CD8-positive, alpha-beta T cell (primary cell): ENCODE measurements at regions of chr1 and their contacts with region 1.

Region 1: DNA sequence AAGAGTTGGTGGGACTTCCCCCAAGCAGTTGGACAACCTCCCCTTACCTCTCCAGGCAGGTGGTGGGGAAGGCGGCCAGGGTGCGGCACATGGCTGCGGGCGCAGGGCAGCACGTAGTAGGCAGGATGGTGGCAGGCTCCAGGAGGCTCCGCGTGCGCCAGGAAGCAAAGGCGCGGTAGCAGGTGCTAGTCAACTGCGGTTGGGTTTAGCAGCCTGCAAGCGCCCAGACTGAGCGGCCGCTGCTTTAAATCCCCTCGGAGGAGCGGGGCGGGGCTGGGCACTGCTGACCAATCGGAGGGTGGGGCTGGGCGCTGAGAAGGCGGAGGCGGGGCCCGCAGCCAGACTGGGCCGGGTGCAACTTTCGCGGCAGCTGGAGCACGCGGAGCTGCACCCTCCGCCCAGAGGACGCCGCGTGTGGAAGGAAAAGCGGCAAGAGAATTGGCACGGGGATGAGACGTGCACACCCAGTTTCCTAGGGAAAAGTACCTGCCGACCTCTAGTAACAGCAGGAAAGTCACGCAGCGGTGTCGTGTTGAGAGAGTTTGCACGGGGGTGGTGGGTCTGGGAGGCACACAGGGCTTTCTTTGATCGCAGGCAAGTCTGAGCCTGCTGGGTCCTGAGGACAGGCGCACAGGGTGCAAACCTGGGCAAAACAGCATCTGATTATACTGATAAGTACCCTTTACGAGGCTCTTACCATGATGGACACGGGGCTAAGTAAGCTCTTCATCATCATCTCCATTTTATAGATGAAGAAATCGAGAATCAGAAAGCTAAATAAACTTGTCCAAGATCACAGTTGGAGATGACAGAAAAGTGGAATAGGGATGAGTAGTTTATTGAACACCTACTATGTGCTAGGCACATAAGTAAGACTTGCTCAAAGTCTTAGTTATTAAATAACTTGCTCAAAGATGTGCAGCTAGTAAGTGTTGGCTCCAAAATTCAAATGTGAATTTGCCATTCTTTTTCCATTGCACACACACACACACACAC is at the start of gene RGS16:
- DNase-seq: peak; percentile 74 to 94 (median 87)
- ATAC-seq: peak; percentile 91
- H3K4me3 ChIP-seq: peak within 1 kb of the TSS; percentile 18 to 45
- H3K4me3 Mint-ChIP-seq: peak within 1 kb of the TSS; percentile 78
- H3K27ac ChIP-seq: no peak within 1 kb of the TSS
- H3K27ac Mint-ChIP-seq: peak within 1 kb of the TSS; percentile 81
- H3K4me1 ChIP-seq: peaks cover 16% of the 10 kb centered on the region
- H3K4me1 Mint-ChIP-seq: peaks cover 17% of the 10 kb centered on the region
- H3K27me3 ChIP-seq: peaks cover 0 to 6% of the 10 kb centered on the region in 2 experiments
- H3K27me3 Mint-ChIP-seq: peaks cover 24% of the 10 kb centered on the region
- CTCF ChIP-seq: no peak
- total RNA-seq, gene RGS16: 11.6 to 12.0 TPM

Region 2: DNA sequence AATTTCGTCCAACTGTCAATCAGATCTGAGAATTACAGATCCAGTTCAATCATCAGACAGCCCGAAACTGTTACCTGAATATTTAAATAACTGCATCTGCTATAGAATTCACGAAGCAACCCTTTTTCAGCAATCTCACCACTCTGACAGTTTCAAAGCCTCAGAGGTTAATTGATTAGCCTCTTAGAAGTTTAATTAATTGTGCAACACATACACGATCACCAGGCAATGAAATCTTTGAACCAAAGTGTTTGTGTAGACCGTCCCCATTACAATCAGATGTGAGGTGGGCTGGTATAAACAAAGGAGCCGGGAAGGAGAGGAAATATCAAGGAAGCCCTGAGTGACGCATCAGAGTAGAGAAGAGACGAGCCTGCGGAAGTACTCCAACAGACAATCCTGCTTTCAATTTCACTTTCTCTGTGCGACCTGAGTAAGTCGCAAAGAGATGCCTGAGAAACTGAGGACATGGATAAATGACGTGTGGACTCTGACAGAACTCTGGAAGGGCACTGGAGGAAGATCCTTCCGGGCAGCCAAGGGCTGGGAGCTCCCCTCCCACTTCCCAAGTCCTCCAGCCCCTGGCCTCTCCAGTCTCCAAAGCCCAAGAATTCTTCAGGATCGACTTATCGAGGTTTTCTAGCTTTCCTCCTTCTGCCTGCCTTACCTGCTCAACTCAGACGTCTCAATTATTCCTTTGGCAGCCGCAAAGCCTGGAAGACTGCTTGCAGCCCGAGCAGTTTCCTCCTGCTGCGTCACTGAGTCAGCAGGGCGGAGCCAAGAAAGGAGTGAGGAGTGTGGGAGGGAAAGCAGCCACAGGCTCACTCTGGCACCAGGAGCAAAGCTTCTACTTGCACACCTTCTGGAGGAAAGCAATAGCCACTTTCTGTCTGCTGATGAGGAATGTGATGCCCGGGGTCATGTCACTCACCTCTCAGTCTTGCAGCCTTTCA is 15.7 kb before region 1 on chr1 and contains the start of gene RNASEL:
- CTCF ChIA-PET with region 1: interaction called, 47 read pairs
- POLR2A ChIA-PET with region 1: interaction called, 3 read pairs
- intact Hi-C with region 1: no loop called
- DNase-seq: peak; percentile 24 to 87 (median 51)
- ATAC-seq: peak; percentile 92
- H3K4me3 ChIP-seq: peak within 1 kb of the TSS; percentile 78 to 95
- H3K4me3 Mint-ChIP-seq: peak within 1 kb of the TSS; percentile 94
- H3K27ac ChIP-seq: peak within 1 kb of the TSS; percentile 96 to 99
- H3K27ac Mint-ChIP-seq: peak within 1 kb of the TSS; percentile 99
- H3K4me1 ChIP-seq: peaks cover 44% of the 10 kb centered on the region
- H3K4me1 Mint-ChIP-seq: peaks cover 52% of the 10 kb centered on the region
- H3K27me3 ChIP-seq: no peaks in the 10 kb centered on the region
- H3K27me3 Mint-ChIP-seq: peaks cover 3% of the 10 kb centered on the region
- CTCF ChIP-seq: no peak
- total RNA-seq, gene RNASEL: 1.5 to 1.7 TPM

Region 3: GRCh38 chr1:182614796-182615454 is 10.5 kb after region 1 on chr1:
- CTCF ChIA-PET with region 1: interaction called, 28 read pairs
- POLR2A ChIA-PET with region 1: interaction called, 9 read pairs
- intact Hi-C with region 1: loop called (anchors 1 kb)
- DNase-seq: peak in 6 of 9 experiments; percentile 12 to 70 (median 42)
- ATAC-seq: peak; percentile 3
- H3K4me3 ChIP-seq: peak overlapping the region; percentile 38 to 46
- H3K4me3 Mint-ChIP-seq: peak overlapping the region; percentile 73
- H3K27ac ChIP-seq: no peak overlapping the region
- H3K27ac Mint-ChIP-seq: peak overlapping the region; percentile 91
- H3K4me1 ChIP-seq: peaks cover 32% of the 10 kb centered on the region
- H3K4me1 Mint-ChIP-seq: peaks cover 30% of the 10 kb centered on the region
- H3K27me3 ChIP-seq: peaks cover 19 to 25% of the 10 kb centered on the region in 2 experiments
- H3K27me3 Mint-ChIP-seq: peaks cover 66% of the 10 kb centered on the region
- CTCF ChIP-seq: no peak

Region 4: DNA sequence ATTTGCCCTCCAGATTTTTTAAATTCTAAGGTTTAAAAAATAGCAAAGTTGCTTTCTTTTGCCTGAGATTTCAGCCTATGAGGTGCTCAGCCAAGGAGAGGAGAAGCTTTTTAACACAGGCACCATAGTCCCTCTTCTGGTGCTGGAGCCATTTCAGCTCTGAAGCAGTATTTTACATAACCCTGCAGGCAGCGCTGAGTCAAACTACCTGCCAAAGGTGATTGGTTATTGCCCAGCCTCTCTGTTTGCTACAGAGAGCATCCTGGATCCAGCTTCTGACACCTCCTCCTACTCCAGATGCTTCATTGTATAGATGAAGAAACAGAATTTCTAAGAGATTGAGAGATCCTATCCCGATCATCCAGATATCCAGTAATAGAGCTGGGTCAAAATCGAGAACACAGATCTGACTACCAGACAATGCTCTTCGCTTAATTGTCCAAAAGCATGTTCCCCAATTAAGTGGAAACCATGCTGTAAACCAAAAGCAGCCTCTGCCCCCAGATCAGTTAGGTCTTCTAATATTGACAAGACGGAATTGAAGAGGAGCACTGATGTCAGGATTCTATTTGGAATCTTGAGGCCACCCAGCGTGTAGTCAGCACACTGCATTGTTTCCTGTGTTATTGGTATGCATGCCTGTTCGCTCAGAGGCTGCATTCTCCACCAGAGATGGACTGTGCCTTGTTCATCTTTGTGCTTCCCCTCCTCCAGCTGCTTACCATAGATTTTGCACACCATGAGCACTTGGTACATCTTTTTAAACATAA is 57.8 kb after region 1 on chr1:
- CTCF ChIA-PET with region 1: interaction called, 4 read pairs
- POLR2A ChIA-PET with region 1: interaction called, 3 read pairs
- intact Hi-C with region 1: loop called in 1 of 2 experiments (anchors 5 kb)
- DNase-seq: no peak
- ATAC-seq: no peak
- H3K4me3 ChIP-seq: no peak overlapping the region
- H3K4me3 Mint-ChIP-seq: no peak overlapping the region
- H3K27ac ChIP-seq: no peak overlapping the region
- H3K27ac Mint-ChIP-seq: no peak overlapping the region
- H3K4me1 ChIP-seq: no peaks in the 10 kb centered on the region
- H3K4me1 Mint-ChIP-seq: no peaks in the 10 kb centered on the region
- H3K27me3 ChIP-seq: no peaks in the 10 kb centered on the region
- H3K27me3 Mint-ChIP-seq: peaks cover 7% of the 10 kb centered on the region
- CTCF ChIP-seq: no peak

Region 5: GRCh38 chr1:182781841-182782586 is 177.5 kb after region 1 on chr1:
- CTCF ChIA-PET with region 1: interaction called, 581 read pairs
- POLR2A ChIA-PET with region 1: interaction called, 5 read pairs
- intact Hi-C with region 1: loop called (anchors 1 kb)
- DNase-seq: peak; percentile 39 to 77 (median 66)
- ATAC-seq: peak; percentile 80
- H3K4me3 ChIP-seq: no peak overlapping the region
- H3K4me3 Mint-ChIP-seq: no peak overlapping the region
- H3K27ac ChIP-seq: no peak overlapping the region
- H3K27ac Mint-ChIP-seq: no peak overlapping the region
- H3K4me1 ChIP-seq: no peaks in the 10 kb centered on the region
- H3K4me1 Mint-ChIP-seq: peaks cover 3% of the 10 kb centered on the region
- H3K27me3 ChIP-seq: no peaks in the 10 kb centered on the region
- H3K27me3 Mint-ChIP-seq: peaks cover 2% of the 10 kb centered on the region
- CTCF ChIP-seq: peak; percentile 62

Region 6: GRCh38 chr1:182789138-182790076 is 184.9 kb after region 1 on chr1 and contains the start of gene NPL:
- CTCF ChIA-PET with region 1: interaction called, 581 read pairs
- POLR2A ChIA-PET with region 1: interaction called, 5 read pairs
- intact Hi-C with region 1: loop called (anchors 1 kb)
- DNase-seq: peak; percentile 65 to 92 (median 83)
- ATAC-seq: peak; percentile 96
- H3K4me3 ChIP-seq: peak within 1 kb of the TSS; percentile 69 to 75
- H3K4me3 Mint-ChIP-seq: peak within 1 kb of the TSS; percentile 91
- H3K27ac ChIP-seq: peak within 1 kb of the TSS; percentile 45 to 57
- H3K27ac Mint-ChIP-seq: peak within 1 kb of the TSS; percentile 76
- H3K4me1 ChIP-seq: peaks cover 12% of the 10 kb centered on the region
- H3K4me1 Mint-ChIP-seq: peaks cover 14% of the 10 kb centered on the region
- H3K27me3 ChIP-seq: no peaks in the 10 kb centered on the region
- H3K27me3 Mint-ChIP-seq: no peaks in the 10 kb centered on the region
- CTCF ChIP-seq: no peak
- total RNA-seq, gene NPL: 1.3 to 2.1 TPM

Region 7: DNA sequence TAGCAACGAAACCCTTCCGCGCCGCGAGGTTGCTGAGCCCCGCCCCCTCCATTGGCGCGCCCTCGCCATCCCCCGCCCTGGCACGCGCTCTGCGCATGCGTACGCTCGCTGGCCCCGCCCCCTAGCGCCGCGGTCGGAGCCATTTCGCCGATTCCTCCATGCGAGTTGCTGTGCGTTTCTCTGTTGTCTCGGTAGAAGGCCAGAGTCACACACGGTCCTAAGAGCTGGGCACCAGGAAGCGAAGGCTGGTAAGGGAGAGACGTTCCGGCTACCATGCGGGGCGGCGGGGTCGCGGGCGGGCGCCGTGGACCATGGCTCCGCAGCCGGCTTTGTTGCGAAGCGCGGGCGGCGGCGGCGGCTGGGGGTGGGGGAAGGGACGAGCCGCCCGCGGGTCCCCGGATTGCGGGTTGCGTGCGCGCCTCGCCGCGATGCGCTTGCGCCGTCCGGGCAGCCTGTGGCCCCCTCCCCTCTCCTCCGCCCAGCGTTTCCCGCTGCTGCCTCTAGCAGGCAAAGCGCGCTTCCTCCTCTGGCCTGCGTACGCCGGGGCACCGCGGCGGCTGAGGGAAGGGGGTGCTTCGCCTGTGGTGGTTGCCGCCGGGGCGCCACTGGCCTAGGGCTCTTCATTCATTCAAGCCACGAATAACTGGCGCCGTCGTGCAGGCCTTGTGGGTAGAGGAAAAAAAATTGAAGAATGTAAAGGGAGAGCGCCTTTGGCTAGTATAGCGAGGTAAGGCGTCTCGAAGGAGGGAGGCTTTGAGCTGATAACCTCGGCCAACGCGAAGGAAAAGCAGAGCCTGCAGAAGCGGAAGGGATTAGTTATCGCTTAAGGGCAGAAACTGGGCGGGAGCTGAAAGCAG is 235.0 kb after region 1 on chr1 and contains the start of gene DHX9:
- CTCF ChIA-PET with region 1: interaction called, 3 read pairs
- POLR2A ChIA-PET with region 1: no interaction called
- intact Hi-C with region 1: loop called (anchors 2 to 5 kb)
- DNase-seq: peak; percentile 93 to 99 (median 96)
- ATAC-seq: peak; percentile 84
- H3K4me3 ChIP-seq: peak within 1 kb of the TSS; percentile 69 to 87
- H3K4me3 Mint-ChIP-seq: peak within 1 kb of the TSS; percentile 95
- H3K27ac ChIP-seq: peak within 1 kb of the TSS; percentile 66 to 86
- H3K27ac Mint-ChIP-seq: peak within 1 kb of the TSS; percentile 98
- H3K4me1 ChIP-seq: peaks cover 36% of the 10 kb centered on the region
- H3K4me1 Mint-ChIP-seq: peaks cover 49% of the 10 kb centered on the region
- H3K27me3 ChIP-seq: no peaks in the 10 kb centered on the region
- H3K27me3 Mint-ChIP-seq: no peaks in the 10 kb centered on the region
- CTCF ChIP-seq: peak; percentile 28
- total RNA-seq, gene DHX9: 374 to 382 TPM

Region 8: DNA sequence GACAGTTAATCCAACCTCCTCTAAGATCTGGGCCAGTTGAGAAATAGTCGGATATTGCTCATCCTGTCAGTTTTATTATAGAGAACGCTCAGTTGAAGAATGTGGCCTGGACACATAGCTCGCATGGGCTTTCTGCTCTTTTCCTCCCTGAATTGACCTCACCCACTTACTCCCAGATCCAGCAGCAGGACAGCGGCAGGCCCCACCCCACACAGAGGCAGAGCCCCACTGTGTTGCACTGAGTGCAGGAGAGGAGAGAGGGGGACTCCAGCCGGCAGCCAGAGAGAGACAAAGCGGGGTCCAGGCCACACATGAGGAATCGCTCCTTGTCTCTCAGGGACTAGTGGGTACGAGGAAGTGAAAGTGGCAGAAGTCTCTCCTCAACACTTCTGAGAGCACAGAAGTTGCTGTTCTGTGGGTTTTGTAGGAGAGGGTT is 497.4 kb after region 1 on chr1:
- CTCF ChIA-PET with region 1: no interaction called
- POLR2A ChIA-PET with region 1: no interaction called
- intact Hi-C with region 1: no loop called
- DNase-seq: no peak
- ATAC-seq: no peak
- H3K4me3 ChIP-seq: no peak overlapping the region
- H3K4me3 Mint-ChIP-seq: no peak overlapping the region
- H3K27ac ChIP-seq: no peak overlapping the region
- H3K27ac Mint-ChIP-seq: no peak overlapping the region
- H3K4me1 ChIP-seq: no peaks in the 10 kb centered on the region
- H3K4me1 Mint-ChIP-seq: no peaks in the 10 kb centered on the region
- H3K27me3 ChIP-seq: peaks cover 0 to 3% of the 10 kb centered on the region in 2 experiments
- H3K27me3 Mint-ChIP-seq: peaks cover 12% of the 10 kb centered on the region
- CTCF ChIP-seq: no peak

Region 9: DNA sequence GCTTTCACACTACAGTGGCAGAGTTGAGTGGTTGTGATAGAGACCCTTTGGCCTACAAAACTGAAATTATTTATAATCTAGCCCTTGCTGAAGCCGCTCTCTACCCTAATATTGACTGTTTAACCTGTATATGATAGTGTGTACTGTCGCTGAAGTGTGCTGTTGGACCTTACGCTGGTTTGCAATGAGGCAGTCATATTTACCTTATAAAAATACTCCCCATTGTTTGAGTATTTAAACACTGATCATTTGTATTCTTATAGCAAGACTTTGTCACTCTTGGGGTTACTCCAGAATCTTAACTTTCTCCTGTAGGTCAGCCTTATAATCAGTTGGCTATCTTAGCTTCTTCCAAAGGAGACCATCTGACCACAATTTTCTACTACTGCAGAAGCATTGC is 924.1 kb after region 1 on chr1:
- CTCF ChIA-PET with region 1: no interaction called
- POLR2A ChIA-PET with region 1: no interaction called
- intact Hi-C with region 1: no loop called
- DNase-seq: no peak
- ATAC-seq: no peak
- H3K4me3 ChIP-seq: no peak overlapping the region
- H3K4me3 Mint-ChIP-seq: no peak overlapping the region
- H3K27ac ChIP-seq: no peak overlapping the region
- H3K27ac Mint-ChIP-seq: no peak overlapping the region
- H3K4me1 ChIP-seq: no peaks in the 10 kb centered on the region
- H3K4me1 Mint-ChIP-seq: no peaks in the 10 kb centered on the region
- H3K27me3 ChIP-seq: no peaks in the 10 kb centered on the region
- H3K27me3 Mint-ChIP-seq: no peaks in the 10 kb centered on the region
- CTCF ChIP-seq: no peak